Adrenal gland (tissue), 19 donors: ENCODE measurements at regions of chr3 and their contacts with region 1.

Region 1: DNA sequence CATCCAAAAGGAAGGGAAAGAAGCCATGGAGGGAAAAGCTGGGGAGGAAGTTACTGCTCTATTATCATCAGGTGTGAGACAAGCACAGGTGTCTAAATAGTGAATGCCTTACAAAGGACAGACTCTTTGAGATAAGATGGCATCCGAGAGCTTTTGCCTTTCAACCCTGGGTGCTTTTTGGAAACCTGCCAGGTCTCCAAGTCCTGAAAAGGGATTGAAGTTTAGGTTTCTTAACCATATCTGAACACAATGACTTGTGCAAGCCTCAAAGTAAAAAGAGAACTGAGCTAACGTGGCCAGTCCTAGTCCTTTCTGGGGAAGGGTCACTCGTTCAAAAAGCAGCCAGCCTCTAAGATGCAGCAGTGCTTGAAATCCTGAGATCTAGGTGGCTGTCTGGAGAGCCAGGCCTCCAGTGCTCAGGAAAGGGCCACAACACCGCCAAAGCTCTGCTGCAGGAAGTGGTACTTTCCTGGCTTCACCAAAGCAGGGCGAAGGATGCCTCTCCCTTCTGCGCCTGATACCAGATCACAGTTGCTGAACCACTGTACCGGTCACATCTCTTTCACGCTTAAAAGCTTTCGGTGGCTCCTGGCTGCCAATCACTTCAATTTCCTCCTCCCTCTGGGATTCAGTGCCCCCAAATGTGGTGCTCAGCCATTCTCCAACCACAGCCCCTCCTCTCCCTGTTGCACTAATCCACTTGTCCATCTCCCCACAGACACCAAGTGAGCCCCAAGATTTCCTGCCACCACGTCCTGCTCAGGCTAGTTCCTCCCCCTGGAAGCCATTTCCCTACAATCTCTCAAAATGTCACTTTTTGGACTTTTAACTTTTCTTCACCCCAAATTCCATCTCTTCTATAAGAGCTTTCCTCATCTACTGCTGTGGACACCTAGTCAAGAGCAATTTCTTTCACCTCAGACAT is 104.1 kb upstream of the LPP start:
- DNase-seq: no peak
- H3K4me3 ChIP-seq: no peak overlapping the region
- H3K27ac ChIP-seq: no peak overlapping the region
- H3K4me1 ChIP-seq: peaks cover 16 to 22% of the 10 kb centered on the region in 2 donors
- H3K27me3 ChIP-seq: no peaks in the 10 kb centered on the region
- CTCF ChIP-seq: no peak
- POLR2A ChIP-seq: no peak

Region 2: GRCh38 chr3:187852842-187853727 is 196.8 kb before region 1 on chr3:
- intact Hi-C with region 1: no loop called
- DNase-seq: peak in 5 of 7 donors; percentile 45 to 64 (median 56)
- H3K4me3 ChIP-seq: no peak overlapping the region
- H3K27ac ChIP-seq: peak overlapping the region in 2 of 5 donors; percentile 38 to 53
- H3K4me1 ChIP-seq: no peaks in the 10 kb centered on the region
- H3K27me3 ChIP-seq: no peaks in the 10 kb centered on the region
- CTCF ChIP-seq: no peak
- POLR2A ChIP-seq: no peak

Region 3: DNA sequence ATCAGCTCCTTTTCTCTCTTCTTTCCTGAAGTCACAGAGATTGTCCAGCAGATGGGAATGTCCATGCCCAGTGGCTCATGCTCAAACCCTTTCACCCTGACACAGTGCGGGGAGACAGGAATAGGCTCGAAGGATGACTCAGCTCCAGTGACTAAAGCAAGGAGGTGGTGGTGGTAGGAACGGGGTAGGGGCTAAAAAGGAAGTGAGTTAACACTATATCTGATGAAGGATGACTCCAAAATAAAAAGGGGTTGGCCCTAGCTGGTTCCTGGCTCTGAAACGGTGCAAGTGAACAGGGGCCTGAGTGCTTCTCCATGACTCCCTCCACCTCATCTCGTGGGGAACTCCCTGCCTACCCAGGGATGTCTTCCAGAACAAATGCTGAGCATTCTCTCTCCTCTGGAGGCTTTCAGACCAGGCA is 63.3 kb before region 1 on chr3:
- intact Hi-C with region 1: loop called in 1 of 2 experiments (anchors 10 kb)
- DNase-seq: peak in 3 of 7 donors; percentile 33 to 64 (median 41)
- H3K4me3 ChIP-seq: no peak overlapping the region
- H3K27ac ChIP-seq: no peak overlapping the region
- H3K4me1 ChIP-seq: peaks cover 6 to 9% of the 10 kb centered on the region in 2 donors
- H3K27me3 ChIP-seq: no peaks in the 10 kb centered on the region
- CTCF ChIP-seq: no peak
- POLR2A ChIP-seq: no peak

Region 4: GRCh38 chr3:188584162-188584529 is 534.3 kb after region 1 on chr3:
- intact Hi-C with region 1: loop called in 1 of 2 experiments (anchors 10 kb)
- DNase-seq: peak in 4 of 7 donors; percentile 25 to 56 (median 44)
- H3K4me3 ChIP-seq: peak overlapping the region in 1 of 4 donors; percentile 13
- H3K27ac ChIP-seq: peak overlapping the region in 3 of 5 donors; percentile 4 to 51 (median 47)
- H3K4me1 ChIP-seq: peaks cover 12 to 29% of the 10 kb centered on the region in 2 donors
- H3K27me3 ChIP-seq: no peaks in the 10 kb centered on the region
- CTCF ChIP-seq: no peak
- POLR2A ChIP-seq: no peak